ENCODE measurements at regions of chr19 and their contacts with region 1.

Region 1: GRCh38 chr19:41934849-41935374 is 6.7 kb upstream of the ERFL start:
- DNase-seq: peak in 3 of 4 donors; percentile 64 to 87 (median 66)
- ATAC-seq: peak; percentile 82
- H3K4me3 ChIP-seq: no peak overlapping the region
- H3K27ac ChIP-seq: no peak overlapping the region
- H3K4me1 ChIP-seq: peaks cover 0 to 6% of the 10 kb centered on the region in 2 donors
- H3K27me3 ChIP-seq: peaks cover 30 to 82% of the 10 kb centered on the region in 2 donors
- CTCF ChIP-seq: peak; percentile 78 to 90

Region 2: DNA sequence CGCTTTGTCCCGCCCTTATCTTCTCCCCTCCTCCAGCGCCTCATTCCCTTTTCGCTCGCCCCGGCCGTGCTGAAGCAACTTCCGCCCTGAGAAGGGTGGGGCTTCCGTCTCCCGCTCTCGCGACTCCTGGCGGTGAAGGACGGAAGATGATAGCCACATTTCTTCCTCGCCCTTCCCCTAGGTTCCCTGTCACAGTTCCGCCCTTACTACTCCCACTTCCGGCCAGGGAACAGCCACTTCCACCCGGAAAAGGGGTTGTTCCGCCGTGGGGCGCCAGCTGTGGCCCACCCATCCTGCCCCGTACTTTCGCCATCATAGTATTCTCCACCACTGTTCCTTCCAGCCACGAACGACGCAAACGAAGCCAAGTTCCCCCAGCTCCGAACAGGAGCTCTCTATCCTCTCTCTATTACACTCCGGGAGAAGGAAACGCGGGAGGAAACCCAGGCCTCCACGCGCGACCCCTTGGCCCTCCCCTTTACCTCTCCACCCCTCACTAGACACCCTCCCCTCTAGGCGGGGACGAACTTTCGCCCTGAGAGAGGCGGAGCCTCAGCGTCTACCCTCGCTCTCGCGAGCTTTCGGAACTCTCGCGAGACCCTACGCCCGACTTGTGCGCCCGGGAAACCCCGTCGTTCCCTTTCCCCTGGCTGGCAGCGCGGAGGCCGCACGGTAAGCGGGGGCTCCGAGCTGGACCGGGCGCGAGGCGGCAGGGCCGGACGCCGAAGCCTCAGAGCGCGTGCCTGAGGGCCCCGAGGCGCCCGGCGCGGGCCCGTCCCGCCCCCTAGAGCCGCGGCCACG is 75.1 kb before region 1 on chr19 and contains the start of gene RPS19:
- intact Hi-C with region 1: loop called in 1 of 2 experiments (anchors 10 kb)
- DNase-seq: peak; percentile 98 to 99 (median 98)
- ATAC-seq: peak; percentile 93
- H3K4me3 ChIP-seq: peak within 1 kb of the TSS; percentile 90 to 96
- H3K27ac ChIP-seq: peak within 1 kb of the TSS; percentile 96 to 97
- H3K4me1 ChIP-seq: peaks cover 19 to 49% of the 10 kb centered on the region in 2 donors
- H3K27me3 ChIP-seq: no peaks in the 10 kb centered on the region
- CTCF ChIP-seq: peak; percentile 43 to 77
- polyA plus RNA-seq, gene RPS19: 1,694 to 2,456 (median 1,910) TPM

Region 3: GRCh38 chr19:41872775-41873647 is 61.9 kb before region 1 on chr19:
- intact Hi-C with region 1: loop called (anchors 5 to 10 kb)
- DNase-seq: peak in 3 of 4 donors; percentile 60 to 96 (median 78)
- ATAC-seq: peak; percentile 84
- H3K4me3 ChIP-seq: no peak overlapping the region
- H3K27ac ChIP-seq: peak overlapping the region in 1 of 2 donors; percentile 74
- H3K4me1 ChIP-seq: peaks cover 22 to 87% of the 10 kb centered on the region in 2 donors
- H3K27me3 ChIP-seq: no peaks in the 10 kb centered on the region
- CTCF ChIP-seq: peak; percentile 61 to 66